Breast epithelium (tissue), 4 donors: ENCODE measurements at regions of chr22 and their contacts with region 1.

Region 1: DNA sequence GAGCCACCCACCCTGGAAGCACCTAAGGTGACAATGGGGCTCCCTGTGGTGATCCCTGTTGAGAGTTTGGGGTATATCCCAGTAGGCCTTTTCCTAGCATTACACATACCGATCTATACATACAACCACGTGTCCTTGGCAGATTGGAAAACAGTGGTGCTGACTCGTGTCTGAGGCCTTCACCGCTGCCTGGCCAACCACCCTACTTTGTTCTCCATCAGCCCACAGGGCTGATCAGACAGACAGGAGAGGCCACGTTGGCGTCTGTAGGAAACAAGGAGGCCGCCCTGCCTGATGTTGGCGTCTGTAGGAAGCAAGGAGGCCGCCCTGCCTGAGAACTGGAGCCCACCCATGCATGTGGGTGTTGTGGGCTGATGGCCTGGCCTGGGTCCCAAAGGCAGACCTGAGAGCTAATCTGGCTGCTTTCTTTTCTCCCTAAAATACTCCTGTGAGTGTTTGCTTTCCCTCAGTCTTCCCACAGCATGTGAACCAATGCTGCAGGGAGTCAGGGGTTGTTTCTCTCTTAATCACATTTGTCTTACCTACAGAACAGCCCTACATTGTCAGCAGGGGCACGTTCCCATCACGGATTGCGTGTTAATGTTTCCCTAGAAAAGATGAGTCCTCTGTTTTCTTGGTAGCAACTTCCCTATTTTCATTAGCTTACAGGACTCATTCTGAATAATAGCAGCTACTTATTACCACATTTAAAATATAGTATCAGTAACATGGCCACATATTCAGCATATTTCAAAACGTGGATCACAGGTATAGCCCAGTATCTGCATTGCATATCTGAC is 57.2 kb downstream of the SBF1 start:
- DNase-seq: no peak
- H3K4me3 ChIP-seq: no peak overlapping the region
- H3K27ac ChIP-seq: no peak overlapping the region
- H3K4me1 ChIP-seq: no peaks in the 10 kb centered on the region
- H3K27me3 ChIP-seq: no peaks in the 10 kb centered on the region
- CTCF ChIP-seq: no peak
- POLR2A ChIP-seq: no peak

Region 2: GRCh38 chr22:50150149-50151129 is 267.2 kb before region 1 on chr22:
- intact Hi-C with region 1: loop called (anchors 5 kb)
- DNase-seq: no peak
- H3K4me3 ChIP-seq: no peak overlapping the region
- H3K27ac ChIP-seq: no peak overlapping the region
- H3K4me1 ChIP-seq: no peaks in the 10 kb centered on the region
- H3K27me3 ChIP-seq: no peaks in the 10 kb centered on the region
- CTCF ChIP-seq: no peak
- POLR2A ChIP-seq: no peak

Region 3: GRCh38 chr22:50314455-50315288 is 102.9 kb before region 1 on chr22:
- intact Hi-C with region 1: no loop called
- DNase-seq: no peak
- H3K4me3 ChIP-seq: peak overlapping the region in 1 of 3 donors; percentile 11
- H3K27ac ChIP-seq: peak overlapping the region in 1 of 2 donors; percentile 19
- H3K4me1 ChIP-seq: no peaks in the 10 kb centered on the region
- H3K27me3 ChIP-seq: no peaks in the 10 kb centered on the region
- CTCF ChIP-seq: no peak
- POLR2A ChIP-seq: no peak

Region 4: GRCh38 chr22:50367778-50368500 is 49.7 kb before region 1 on chr22:
- intact Hi-C with region 1: no loop called
- DNase-seq: no peak
- H3K4me3 ChIP-seq: no peak overlapping the region
- H3K27ac ChIP-seq: no peak overlapping the region
- H3K4me1 ChIP-seq: no peaks in the 10 kb centered on the region
- H3K27me3 ChIP-seq: no peaks in the 10 kb centered on the region
- CTCF ChIP-seq: no peak
- POLR2A ChIP-seq: no peak